Caco-2 (cell line): ENCODE measurements at regions of chr1 and their contacts with region 1.

Region 1: DNA sequence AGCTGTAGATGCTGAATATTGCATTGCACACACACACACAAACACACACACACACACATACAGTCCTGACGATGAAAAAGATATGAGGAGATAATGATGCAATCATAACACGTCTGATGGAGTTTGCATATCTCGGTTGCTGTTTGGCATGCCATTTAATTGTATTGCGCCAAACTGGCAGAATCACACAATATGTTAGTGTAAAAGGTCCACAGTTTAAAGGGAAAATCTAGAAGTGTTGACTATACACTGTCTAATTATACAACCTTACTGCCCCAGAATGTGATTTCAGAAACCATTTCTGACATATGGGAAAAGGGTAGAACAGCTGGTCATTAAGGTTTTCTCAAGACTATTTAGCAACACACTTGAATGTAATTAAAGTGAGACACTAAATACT is 123.7 kb upstream of the PROX1 start:
- DNase-seq: no peak
- H3K4me3 ChIP-seq: no peak overlapping the region
- H3K4me3 Mint-ChIP-seq: no peak overlapping the region
- H3K27ac Mint-ChIP-seq: no peak overlapping the region
- H3K4me1 ChIP-seq: no peaks in the 10 kb centered on the region
- H3K4me1 Mint-ChIP-seq: no peaks in the 10 kb centered on the region
- H3K27me3 ChIP-seq: no peaks in the 10 kb centered on the region
- H3K27me3 Mint-ChIP-seq: no peaks in the 10 kb centered on the region
- CTCF ChIP-seq: no peak

Region 2: DNA sequence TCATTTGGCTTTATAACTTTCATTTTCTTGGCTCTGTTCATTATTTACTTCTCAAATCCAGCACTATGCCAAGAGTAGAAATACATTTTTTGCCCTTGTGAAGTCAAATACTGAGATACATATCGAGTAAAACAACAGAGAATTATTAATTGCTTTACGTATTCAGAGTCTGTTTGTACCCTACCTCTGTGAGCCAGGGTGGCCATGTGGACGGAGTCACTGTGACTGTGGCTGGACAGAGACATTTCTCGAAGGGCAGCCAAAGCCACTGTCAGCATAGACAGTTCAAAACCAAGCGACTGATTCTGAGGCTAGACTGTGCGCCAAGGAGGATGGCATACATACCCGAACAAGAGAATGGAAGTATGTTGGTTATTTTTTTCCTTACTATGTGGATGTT is 267.4 kb before region 1 on chr1:
- CTCF ChIA-PET with region 1: no interaction called
- POLR2A ChIA-PET with region 1: no interaction called
- intact Hi-C with region 1: no loop called
- DNase-seq: no peak
- H3K4me3 ChIP-seq: no peak overlapping the region
- H3K4me3 Mint-ChIP-seq: no peak overlapping the region
- H3K27ac Mint-ChIP-seq: no peak overlapping the region
- H3K4me1 ChIP-seq: peaks cover under 1% of the 10 kb centered on the region
- H3K4me1 Mint-ChIP-seq: peaks cover 8% of the 10 kb centered on the region
- H3K27me3 ChIP-seq: no peaks in the 10 kb centered on the region
- H3K27me3 Mint-ChIP-seq: no peaks in the 10 kb centered on the region
- CTCF ChIP-seq: no peak

Region 3: GRCh38 chr1:213891989-213892902 is 28.2 kb after region 1 on chr1:
- CTCF ChIA-PET with region 1: no interaction called
- POLR2A ChIA-PET with region 1: no interaction called
- intact Hi-C with region 1: loop called (anchors 1 kb)
- DNase-seq: no peak
- H3K4me3 ChIP-seq: no peak overlapping the region
- H3K4me3 Mint-ChIP-seq: no peak overlapping the region
- H3K27ac Mint-ChIP-seq: no peak overlapping the region
- H3K4me1 ChIP-seq: no peaks in the 10 kb centered on the region
- H3K4me1 Mint-ChIP-seq: no peaks in the 10 kb centered on the region
- H3K27me3 ChIP-seq: no peaks in the 10 kb centered on the region
- H3K27me3 Mint-ChIP-seq: no peaks in the 10 kb centered on the region
- CTCF ChIP-seq: no peak